ENCODE measurements at regions of chr6 and their contacts with region 1.

Region 1: DNA sequence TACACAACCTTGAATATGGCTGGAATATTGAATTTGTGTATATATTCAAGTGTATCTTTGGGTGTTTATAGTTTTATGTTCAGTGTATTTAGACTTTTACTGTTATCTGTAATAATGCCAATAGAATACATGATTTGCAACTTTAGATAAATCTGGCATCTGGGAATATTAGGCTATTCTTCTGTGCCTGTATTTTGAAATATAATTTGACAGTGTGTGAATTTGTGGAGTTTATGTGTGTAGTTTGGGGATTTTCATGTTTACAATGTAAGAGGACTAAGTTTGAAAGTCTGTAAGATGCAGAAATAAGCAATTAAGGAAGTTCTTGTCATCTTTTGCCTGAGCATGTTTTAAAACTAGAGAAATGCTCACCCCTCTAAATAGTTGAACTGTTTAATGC is at the start of gene OR10C1:
- DNase-seq: no peak
- ATAC-seq: no peak
- H3K4me3 ChIP-seq: no peak within 1 kb of the TSS
- H3K27ac ChIP-seq: no peak within 1 kb of the TSS
- H3K4me1 ChIP-seq: 0 out of 5 replicates have a peak, but pooled peaks cover 0 to 3% of the 10 kb centered on the region in 2 experiments
- H3K27me3 ChIP-seq: peaks cover 0 to 11% of the 10 kb centered on the region in 2 experiments; a peak in 3 of 5 replicates
- CTCF ChIP-seq: no peak
- EP300 ChIP-seq: no peak
- POLR2A ChIP-seq: no peak
- RAD21 ChIP-seq: no peak
- polyA plus RNA-seq, gene OR10C1: not detected

Region 2: GRCh38 chr6:29414588-29414987 is 24.4 kb before region 1 on chr6 and contains the start of gene OR12D1:
- CTCF ChIA-PET with region 1: no interaction called
- POLR2A ChIA-PET with region 1: no interaction called
- in situ Hi-C with region 1: no loop called
- intact Hi-C with region 1: no loop called
- DNase-seq: no peak
- ATAC-seq: no peak
- H3K4me3 ChIP-seq: no peak within 1 kb of the TSS
- H3K27ac ChIP-seq: no peak within 1 kb of the TSS
- H3K4me1 ChIP-seq: no peaks in the 10 kb centered on the region
- H3K27me3 ChIP-seq: peaks cover 0 to 6% of the 10 kb centered on the region in 2 experiments; a peak in 2 of 5 replicates
- CTCF ChIP-seq: peak in 1 of 3 experiments; percentile 39; a peak in 2 of 6 replicates
- EP300 ChIP-seq: no peak
- POLR2A ChIP-seq: no peak
- RAD21 ChIP-seq: peak in 1 of 2 experiments; percentile 21; a peak in 1 of 4 replicates
- polyA plus RNA-seq, gene OR12D1: not detected

Region 3: GRCh38 chr6:29502597-29502996 is 63.6 kb after region 1 on chr6:
- CTCF ChIA-PET with region 1: no interaction called
- POLR2A ChIA-PET with region 1: no interaction called
- in situ Hi-C with region 1: no loop called
- intact Hi-C with region 1: no loop called
- DNase-seq: no peak
- ATAC-seq: no peak
- H3K4me3 ChIP-seq: no peak overlapping the region
- H3K27ac ChIP-seq: no peak overlapping the region
- H3K4me1 ChIP-seq: no peaks in the 10 kb centered on the region
- H3K27me3 ChIP-seq: peaks cover 8 to 55% of the 10 kb centered on the region in 2 experiments; a peak in 4 of 5 replicates
- CTCF ChIP-seq: no peak
- EP300 ChIP-seq: no peak
- POLR2A ChIP-seq: no peak
- RAD21 ChIP-seq: no peak

Region 4: GRCh38 chr6:29516108-29516507 is 77.1 kb after region 1 on chr6:
- CTCF ChIA-PET with region 1: no interaction called
- POLR2A ChIA-PET with region 1: no interaction called
- in situ Hi-C with region 1: no loop called
- intact Hi-C with region 1: loop called (anchors 5 kb)
- DNase-seq: no peak
- ATAC-seq: no peak
- H3K4me3 ChIP-seq: no peak overlapping the region
- H3K27ac ChIP-seq: no peak overlapping the region
- H3K4me1 ChIP-seq: no peaks in the 10 kb centered on the region
- H3K27me3 ChIP-seq: peaks cover 0 to 17% of the 10 kb centered on the region in 2 experiments; a peak in 3 of 5 replicates
- CTCF ChIP-seq: no peak
- EP300 ChIP-seq: no peak
- POLR2A ChIP-seq: no peak
- RAD21 ChIP-seq: no peak